Panc1 (cell line): ENCODE measurements at regions of chr1 and their contacts with region 1.

Region 1: GRCh38 chr1:247172996-247173395 is 1.2 kb upstream of the ZNF124 start:
- DNase-seq: no peak
- ATAC-seq: no peak
- H3K4me3 ChIP-seq: no peak overlapping the region
- H3K27ac ChIP-seq: no peak overlapping the region
- H3K4me1 ChIP-seq: no peaks in the 10 kb centered on the region
- H3K27me3 ChIP-seq: no peaks in the 10 kb centered on the region
- CTCF ChIP-seq: no peak

Region 2: GRCh38 chr1:247317366-247318101 is 144.5 kb after region 1 on chr1:
- CTCF ChIA-PET with region 1: no interaction called
- POLR2A ChIA-PET with region 1: interaction called, 13 read pairs
- in situ Hi-C with region 1: no loop called
- intact Hi-C with region 1: no loop called
- DNase-seq: no peak
- ATAC-seq: no peak
- H3K4me3 ChIP-seq: no peak overlapping the region
- H3K27ac ChIP-seq: no peak overlapping the region
- H3K4me1 ChIP-seq: no peaks in the 10 kb centered on the region
- H3K27me3 ChIP-seq: no peaks in the 10 kb centered on the region
- CTCF ChIP-seq: no peak